ENCODE measurements at regions of chr19 and their contacts with region 1.

Region 1: DNA sequence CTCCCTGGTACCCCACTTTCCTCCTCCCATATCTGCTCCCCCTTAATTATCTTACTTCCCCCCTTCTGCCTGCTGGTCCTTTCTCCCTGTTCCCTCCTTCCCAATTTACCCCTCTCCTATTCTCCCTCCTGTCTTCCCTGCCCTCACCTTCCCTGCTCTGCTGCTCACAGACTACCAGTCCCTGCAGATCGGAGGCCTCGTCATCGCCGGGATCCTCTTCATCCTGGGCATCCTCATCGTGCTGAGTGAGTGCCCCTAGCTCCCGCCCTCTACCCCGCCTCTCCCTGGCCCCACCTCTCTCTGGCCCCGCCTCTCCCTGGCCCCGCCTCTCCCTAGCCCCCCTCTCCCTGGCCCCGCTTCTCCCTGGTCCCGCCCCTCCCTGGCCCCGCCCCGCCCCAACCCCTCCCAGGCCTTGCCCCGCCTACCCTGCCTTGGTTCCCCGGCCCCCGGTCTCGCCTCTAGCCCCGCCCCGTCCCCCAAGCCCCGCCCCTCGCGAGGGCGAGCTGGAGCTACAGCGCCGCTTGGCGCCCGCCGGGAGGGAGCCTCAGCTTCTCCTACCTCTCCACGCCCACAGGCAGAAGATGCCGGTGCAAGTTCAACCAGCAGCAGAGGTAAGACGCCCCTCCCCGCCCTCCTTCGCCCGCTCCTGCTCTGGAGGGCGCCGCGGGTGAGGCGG is 2.0 kb upstream of the FXYD7 start:
- H3K4me3 ChIP-seq: no peak overlapping the region
- H3K27ac ChIP-seq: no peak overlapping the region
- H3K4me1 ChIP-seq: peaks cover 31% of the 10 kb centered on the region
- CTCF ChIP-seq: peak; percentile 90

Region 2: GRCh38 chr19:34416021-34416545 is 725.0 kb before region 1 on chr19:
- CTCF ChIA-PET with region 1: no interaction called
- POLR2A ChIA-PET with region 1: no interaction called
- H3K4me3 ChIP-seq: no peak overlapping the region
- H3K27ac ChIP-seq: no peak overlapping the region
- H3K4me1 ChIP-seq: no peaks in the 10 kb centered on the region
- CTCF ChIP-seq: no peak

Region 3: DNA sequence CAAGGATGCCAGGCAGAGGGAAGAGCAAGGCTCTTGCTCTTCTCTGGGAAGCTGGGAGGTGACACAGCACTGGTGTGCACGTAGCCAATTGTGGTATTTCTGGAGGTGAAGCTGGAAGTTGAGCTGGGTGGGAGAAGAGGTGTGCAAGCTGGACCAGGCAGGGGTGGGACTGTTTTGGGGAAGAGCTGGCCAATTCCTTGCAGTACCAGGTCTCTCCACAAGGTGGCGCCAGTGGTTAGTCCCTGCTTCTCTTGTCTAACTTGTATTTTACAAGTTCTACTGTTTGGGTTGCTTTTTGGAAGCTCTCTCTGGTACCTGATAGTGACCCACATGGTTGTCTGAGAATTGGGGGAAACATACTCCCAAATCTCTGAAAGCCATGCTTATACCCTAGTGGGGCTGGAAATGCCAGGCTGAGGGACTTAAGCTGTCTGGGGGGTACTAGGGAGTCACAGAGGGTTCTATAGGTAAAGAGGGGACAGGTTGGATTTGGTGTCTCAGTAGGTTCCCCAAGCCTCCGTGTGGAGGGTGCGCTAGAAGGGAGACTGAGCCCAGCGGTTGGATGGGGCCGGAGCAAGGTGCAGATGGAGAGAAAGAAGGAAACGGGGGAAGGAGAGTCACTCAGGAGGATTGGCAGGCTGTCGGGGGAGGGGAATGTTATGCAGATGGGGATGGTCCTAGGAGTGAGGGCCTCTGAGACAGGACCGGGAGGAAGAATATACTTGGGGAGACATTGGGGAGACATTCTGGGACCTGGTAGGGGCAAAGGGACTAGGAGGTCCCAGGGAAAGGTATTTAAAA is 96.6 kb before region 1 on chr19:
- CTCF ChIA-PET with region 1: interaction called, 74 read pairs
- POLR2A ChIA-PET with region 1: interaction called, 9 read pairs
- H3K4me3 ChIP-seq: no peak overlapping the region
- H3K27ac ChIP-seq: no peak overlapping the region
- H3K4me1 ChIP-seq: peaks cover 5% of the 10 kb centered on the region; the same call in 1 of the 2 replicates
- CTCF ChIP-seq: peak; percentile 100

Region 4: DNA sequence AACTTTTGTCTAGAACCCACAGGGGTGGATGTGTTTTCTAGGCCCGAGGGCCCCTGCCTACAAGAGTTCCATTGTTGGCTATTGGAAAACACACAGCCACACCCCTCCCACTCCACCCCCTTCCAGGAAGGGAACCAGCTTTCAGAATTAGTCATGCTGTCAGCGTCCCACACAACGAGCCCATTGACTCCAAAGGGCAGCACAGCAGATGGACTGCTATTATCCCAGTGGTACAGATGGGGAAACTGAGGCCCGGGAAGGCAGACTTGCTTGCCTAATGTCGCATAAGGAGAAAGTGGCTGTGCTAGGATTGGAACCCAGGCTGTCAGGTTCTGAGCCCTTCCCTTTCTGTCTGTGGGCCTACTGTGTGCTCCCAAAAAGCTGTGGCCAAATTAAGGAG is 33.6 kb before region 1 on chr19:
- CTCF ChIA-PET with region 1: interaction called, 29 read pairs
- POLR2A ChIA-PET with region 1: interaction called, 4 read pairs
- H3K4me3 ChIP-seq: no peak overlapping the region
- H3K27ac ChIP-seq: no peak overlapping the region
- H3K4me1 ChIP-seq: no peaks in the 10 kb centered on the region
- CTCF ChIP-seq: no peak

Region 5: DNA sequence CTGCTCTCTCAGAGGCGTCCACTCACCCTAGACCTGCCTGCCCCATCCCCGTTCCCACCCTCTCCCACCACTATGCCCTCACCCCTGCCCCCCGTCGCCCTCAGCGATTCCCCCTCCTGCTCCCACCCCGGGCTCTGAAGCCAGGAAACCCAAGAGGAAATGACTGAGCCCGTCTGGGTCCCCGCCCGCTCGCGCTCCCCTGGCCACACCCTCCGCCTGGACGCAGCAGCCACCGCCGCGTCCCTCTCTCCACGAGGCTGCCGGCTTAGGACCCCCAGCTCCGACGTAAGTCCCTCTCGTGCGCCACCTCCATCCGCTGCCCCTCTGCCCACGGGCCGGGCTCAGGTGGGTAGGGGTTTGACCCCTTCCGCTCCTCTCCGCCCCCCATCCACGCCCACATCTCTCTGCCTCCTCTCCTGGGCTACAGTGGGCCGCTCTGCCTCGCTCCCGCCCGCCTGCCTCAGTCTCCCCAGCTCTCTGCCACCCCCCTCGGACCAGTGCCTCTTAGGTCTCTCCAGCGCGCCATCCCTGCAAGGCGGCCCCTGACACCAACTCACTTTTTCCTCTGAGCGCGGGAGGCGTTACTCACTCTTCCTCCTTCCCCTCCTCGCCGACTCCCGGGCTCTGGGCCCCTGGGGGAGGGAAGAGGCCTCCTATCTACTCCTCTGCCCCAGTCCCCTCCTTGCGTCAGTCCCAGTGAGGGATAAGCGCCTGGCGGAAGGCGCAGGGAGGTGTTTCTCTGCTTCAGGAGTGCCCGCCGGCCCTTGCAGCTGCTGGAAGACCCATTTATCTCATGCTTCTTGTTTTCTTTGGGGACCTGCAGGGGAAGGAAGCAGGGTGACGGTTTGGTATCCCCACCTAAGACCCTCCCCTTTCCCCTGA is 13.7 kb after region 1 on chr19 and contains the start of gene FXYD5:
- CTCF ChIA-PET with region 1: interaction called, 82 read pairs
- POLR2A ChIA-PET with region 1: interaction called, 25 read pairs
- H3K4me3 ChIP-seq: peak within 1 kb of the TSS; percentile 57
- H3K27ac ChIP-seq: peak within 1 kb of the TSS; percentile 75; the same call in 1 of the 2 replicates
- H3K4me1 ChIP-seq: peaks cover 20% of the 10 kb centered on the region
- CTCF ChIP-seq: peak; percentile 87

Region 6: GRCh38 chr19:35202722-35203688 is 61.9 kb after region 1 on chr19:
- CTCF ChIA-PET with region 1: interaction called, 10 read pairs
- POLR2A ChIA-PET with region 1: no interaction called
- H3K4me3 ChIP-seq: no peak overlapping the region
- H3K27ac ChIP-seq: no peak overlapping the region
- H3K4me1 ChIP-seq: no peaks in the 10 kb centered on the region
- CTCF ChIP-seq: no peak

Region 7: DNA sequence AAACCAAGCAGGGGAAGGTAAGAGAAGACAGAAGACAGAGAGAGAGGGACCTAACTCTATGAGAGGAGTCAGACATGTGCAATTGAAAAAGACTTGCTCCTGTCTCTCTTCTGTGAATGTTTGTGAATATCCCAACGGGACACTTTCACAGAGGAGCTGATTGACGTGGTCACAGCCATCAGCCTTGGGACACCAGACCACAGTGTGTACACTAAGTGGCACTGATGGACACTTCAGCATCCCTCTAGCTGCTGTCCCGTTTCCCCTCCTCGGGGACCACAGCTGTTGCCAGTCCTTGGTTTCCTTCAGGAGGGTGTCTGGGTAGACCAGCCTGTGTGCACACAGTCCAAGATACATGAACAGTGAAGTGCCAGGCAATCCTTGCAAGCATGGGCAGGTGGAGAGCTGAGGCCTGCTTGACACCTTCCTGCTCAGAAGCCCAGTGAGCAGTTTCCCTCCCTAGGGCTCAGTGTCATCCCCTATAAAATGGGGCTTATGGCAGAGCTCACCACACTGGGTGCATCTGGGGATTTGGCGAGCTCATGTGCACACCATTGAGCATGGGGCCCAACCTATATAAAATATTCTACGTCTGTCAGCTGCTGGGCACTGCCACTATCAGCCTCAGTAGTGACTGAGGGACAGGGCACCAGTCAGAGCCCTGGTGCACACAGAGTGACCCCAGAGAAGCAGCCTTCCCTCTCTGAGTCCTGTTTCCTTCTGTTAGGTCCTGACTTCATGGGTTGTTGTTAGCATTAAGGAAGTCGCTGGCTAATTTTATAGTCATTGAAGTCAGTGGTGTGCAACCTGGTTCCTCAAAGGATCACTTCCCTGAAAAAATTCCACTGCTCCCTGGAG is 123.4 kb after region 1 on chr19:
- CTCF ChIA-PET with region 1: interaction called, 28 read pairs
- POLR2A ChIA-PET with region 1: interaction called, 26 read pairs
- H3K4me3 ChIP-seq: no peak overlapping the region
- H3K27ac ChIP-seq: peak overlapping the region; percentile 100; the same call in 1 of the 2 replicates
- H3K4me1 ChIP-seq: peaks cover 17% of the 10 kb centered on the region
- CTCF ChIP-seq: no peak